CD4-positive, alpha-beta memory T cell (primary cell): ENCODE measurements at regions of chr18 and their contacts with region 1.

Region 1: DNA sequence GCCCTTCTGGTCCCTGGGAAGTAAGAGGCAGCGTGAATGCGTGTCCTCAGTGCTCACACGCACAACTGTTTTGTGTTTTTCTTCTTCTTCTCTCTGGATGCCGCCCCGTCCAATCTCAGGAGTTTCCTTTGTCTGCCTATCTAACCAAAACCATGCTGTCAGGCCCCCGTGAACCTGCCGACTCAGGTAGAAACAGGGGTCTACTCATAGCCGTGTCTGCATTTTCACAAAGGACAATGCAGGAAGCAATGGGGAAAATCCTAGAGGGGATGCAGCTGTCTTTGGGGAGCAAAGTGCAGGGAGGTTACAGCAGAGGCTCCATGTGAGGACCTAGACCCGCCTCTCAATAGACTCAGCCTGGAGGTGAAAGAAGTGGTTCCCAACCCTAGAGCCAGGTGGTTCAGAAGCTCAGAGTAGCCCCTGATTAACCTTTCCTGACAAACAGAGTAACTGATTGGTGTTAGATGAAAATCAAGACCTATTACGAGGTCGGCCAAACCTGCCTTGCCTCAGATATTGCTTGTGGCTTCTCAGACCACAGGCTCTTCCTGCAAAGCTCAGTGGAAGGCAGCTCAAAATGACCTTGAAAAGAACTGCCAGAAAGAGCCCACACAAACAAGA is 49.3 kb downstream of the CD226 start:
- DNase-seq: peak; percentile 20 to 57 (median 28)
- H3K4me3 ChIP-seq: peak overlapping the region; percentile 29 to 54
- H3K4me3 Mint-ChIP-seq: peak overlapping the region; percentile 78 to 91 (median 86)
- H3K27ac ChIP-seq: peak overlapping the region; percentile 64
- H3K27ac Mint-ChIP-seq: peak overlapping the region; percentile 87 to 98 (median 92)
- H3K4me1 ChIP-seq: peaks cover 74% of the 10 kb centered on the region
- H3K4me1 Mint-ChIP-seq: peaks cover 62 to 84% (median 74%) of the 10 kb centered on the region in 4 donors
- H3K27me3 ChIP-seq: no peaks in the 10 kb centered on the region
- H3K27me3 Mint-ChIP-seq: no peaks in the 10 kb centered on the region

Region 2: DNA sequence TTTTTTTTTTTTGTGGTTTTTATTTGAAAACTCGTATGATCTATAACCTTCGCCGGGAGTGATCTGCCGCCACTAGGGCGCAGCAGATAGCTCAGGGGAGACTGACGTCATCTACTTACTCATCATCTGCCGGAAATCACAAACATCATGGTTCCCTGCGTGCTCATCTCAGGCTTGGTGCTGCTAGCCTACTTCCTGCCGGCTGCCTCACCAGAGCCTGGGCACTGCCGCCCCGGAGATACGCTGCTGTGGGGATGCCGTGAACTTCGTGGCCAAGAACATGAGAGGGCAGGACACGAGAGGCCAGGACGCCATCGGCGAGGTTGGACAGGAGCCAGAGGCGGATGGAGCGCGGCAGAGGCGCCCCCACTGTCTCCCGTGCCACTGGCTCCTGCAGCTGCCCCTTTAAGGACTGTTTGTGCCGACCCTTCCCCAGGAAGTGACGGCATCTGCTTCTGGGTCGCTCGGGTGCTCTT is 428.9 kb before region 1 on chr18:
- CTCF ChIA-PET with region 1: no interaction called
- POLR2A ChIA-PET with region 1: no interaction called
- intact Hi-C with region 1: no loop called
- DNase-seq: peak; percentile 23 to 55 (median 41)
- H3K4me3 ChIP-seq: no peak overlapping the region
- H3K4me3 Mint-ChIP-seq: no peak overlapping the region
- H3K27ac ChIP-seq: no peak overlapping the region
- H3K27ac Mint-ChIP-seq: peak overlapping the region in 3 of 7 donors; percentile 46 to 83 (median 51)
- H3K4me1 ChIP-seq: no peaks in the 10 kb centered on the region
- H3K4me1 Mint-ChIP-seq: peaks cover 0 to 14% (median 6%) of the 10 kb centered on the region in 4 donors
- H3K27me3 ChIP-seq: no peaks in the 10 kb centered on the region
- H3K27me3 Mint-ChIP-seq: peaks cover 3% of the 10 kb centered on the region in 2 donors

Region 3: GRCh38 chr18:69885841-69886531 is 12.4 kb before region 1 on chr18:
- CTCF ChIA-PET with region 1: interaction called, 4 read pairs
- POLR2A ChIA-PET with region 1: interaction called, 27 read pairs
- intact Hi-C with region 1: loop called (anchors 1 kb)
- DNase-seq: peak; percentile 21 to 71 (median 26)
- H3K4me3 ChIP-seq: peak overlapping the region in 1 of 2 donors; percentile 17
- H3K4me3 Mint-ChIP-seq: peak overlapping the region; percentile 61 to 88 (median 85)
- H3K27ac ChIP-seq: peak overlapping the region; percentile 25
- H3K27ac Mint-ChIP-seq: peak overlapping the region; percentile 69 to 96 (median 95)
- H3K4me1 ChIP-seq: peaks cover 74% of the 10 kb centered on the region
- H3K4me1 Mint-ChIP-seq: peaks cover 59 to 94% (median 75%) of the 10 kb centered on the region in 4 donors
- H3K27me3 ChIP-seq: no peaks in the 10 kb centered on the region
- H3K27me3 Mint-ChIP-seq: no peaks in the 10 kb centered on the region

Region 4: DNA sequence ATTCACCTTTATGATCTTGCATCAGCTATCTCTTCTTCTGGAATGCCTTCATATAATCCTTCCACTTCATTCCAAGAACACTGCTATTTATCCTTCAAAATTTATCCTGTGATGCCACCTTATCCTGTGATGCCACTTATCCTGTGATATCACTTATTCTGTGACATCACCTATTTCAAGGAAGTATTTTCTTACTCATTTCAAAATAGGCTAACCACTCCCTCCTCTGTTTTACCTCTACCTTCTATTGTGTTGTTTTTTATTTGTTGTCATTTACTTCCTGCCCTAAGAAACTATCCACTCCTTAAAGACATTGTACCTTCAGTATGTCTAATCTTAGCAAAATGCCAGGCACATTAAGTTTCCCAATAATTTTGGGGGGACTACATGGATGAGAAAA is 10.5 kb after region 1 on chr18:
- CTCF ChIA-PET with region 1: interaction called, 9 read pairs
- POLR2A ChIA-PET with region 1: interaction called, 17 read pairs
- intact Hi-C with region 1: loop called (anchors 1 kb)
- DNase-seq: no peak
- H3K4me3 ChIP-seq: no peak overlapping the region
- H3K4me3 Mint-ChIP-seq: peak overlapping the region in 5 of 8 donors; percentile 29 to 85 (median 47)
- H3K27ac ChIP-seq: no peak overlapping the region
- H3K27ac Mint-ChIP-seq: peak overlapping the region; percentile 45 to 86 (median 80)
- H3K4me1 ChIP-seq: peaks cover 68% of the 10 kb centered on the region
- H3K4me1 Mint-ChIP-seq: peaks cover 52 to 82% (median 70%) of the 10 kb centered on the region in 4 donors
- H3K27me3 ChIP-seq: no peaks in the 10 kb centered on the region
- H3K27me3 Mint-ChIP-seq: no peaks in the 10 kb centered on the region

Region 5: GRCh38 chr18:69916412-69916811 is 18.1 kb after region 1 on chr18:
- CTCF ChIA-PET with region 1: interaction called, 3 read pairs
- POLR2A ChIA-PET with region 1: interaction called, 13 read pairs
- intact Hi-C with region 1: no loop called
- DNase-seq: no peak
- H3K4me3 ChIP-seq: no peak overlapping the region
- H3K4me3 Mint-ChIP-seq: peak overlapping the region in 2 of 8 donors; percentile 9 to 42
- H3K27ac ChIP-seq: no peak overlapping the region
- H3K27ac Mint-ChIP-seq: peak overlapping the region in 6 of 7 donors; percentile 16 to 69 (median 46)
- H3K4me1 ChIP-seq: peaks cover 63% of the 10 kb centered on the region
- H3K4me1 Mint-ChIP-seq: peaks cover 55 to 91% (median 73%) of the 10 kb centered on the region in 4 donors
- H3K27me3 ChIP-seq: no peaks in the 10 kb centered on the region
- H3K27me3 Mint-ChIP-seq: no peaks in the 10 kb centered on the region

Region 6: DNA sequence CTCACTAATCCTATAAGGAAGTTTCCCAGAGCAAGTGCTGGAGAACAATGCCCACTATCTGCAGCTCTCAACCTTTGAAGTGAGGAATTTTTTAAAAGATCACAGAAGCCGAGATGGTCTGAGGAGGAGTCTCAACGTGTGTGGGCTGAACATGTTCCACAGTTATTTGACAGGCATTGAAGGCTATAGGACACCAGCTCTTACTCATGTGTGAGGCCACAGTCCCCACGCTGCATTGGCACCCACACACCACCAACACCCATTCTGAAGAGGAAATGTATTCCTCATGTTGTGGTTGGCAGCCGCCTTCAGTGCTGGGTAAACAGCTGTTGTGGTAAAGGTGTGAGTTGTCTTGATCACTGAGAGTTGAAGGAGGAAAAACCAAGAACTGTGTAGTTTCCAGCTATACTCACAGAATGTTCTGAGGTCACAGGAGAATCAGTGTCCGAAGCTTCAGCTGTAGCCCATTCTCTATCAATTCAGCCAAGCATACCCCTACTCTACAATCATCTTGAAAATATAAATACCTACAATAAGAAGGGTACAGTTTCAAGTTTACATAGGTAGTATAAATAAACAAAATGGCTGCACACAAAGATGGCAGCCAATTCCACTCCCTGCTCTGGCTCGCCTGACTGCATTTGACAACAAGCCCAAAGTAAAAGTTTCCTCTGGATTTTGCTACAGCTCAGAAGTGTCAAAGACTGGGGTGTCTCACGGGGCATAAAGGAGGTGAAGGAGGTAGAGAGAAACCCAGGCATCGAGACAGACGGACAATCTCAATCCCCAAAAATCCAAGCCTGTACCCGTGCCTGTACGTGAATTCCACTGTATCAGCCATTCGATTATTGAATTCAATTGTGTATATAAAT is 37.2 kb after region 1 on chr18:
- CTCF ChIA-PET with region 1: interaction called, 21 read pairs
- POLR2A ChIA-PET with region 1: interaction called, 78 read pairs
- intact Hi-C with region 1: loop called (anchors 1 kb)
- DNase-seq: peak; percentile 86 to 95 (median 89)
- H3K4me3 ChIP-seq: peak overlapping the region in 1 of 2 donors; percentile 25
- H3K4me3 Mint-ChIP-seq: peak overlapping the region in 1 of 8 donors; percentile 45
- H3K27ac ChIP-seq: peak overlapping the region; percentile 42
- H3K27ac Mint-ChIP-seq: no peak overlapping the region
- H3K4me1 ChIP-seq: peaks cover 90% of the 10 kb centered on the region
- H3K4me1 Mint-ChIP-seq: peaks cover under 1 to 45% (median 20%) of the 10 kb centered on the region in 4 donors
- H3K27me3 ChIP-seq: no peaks in the 10 kb centered on the region
- H3K27me3 Mint-ChIP-seq: peaks cover 0 to 2% of the 10 kb centered on the region in 2 donors

Region 7: GRCh38 chr18:69947361-69948133 is 49.2 kb after region 1 on chr18 and contains the start of gene CD226:
- CTCF ChIA-PET with region 1: interaction called, 16 read pairs
- POLR2A ChIA-PET with region 1: interaction called, 38 read pairs
- intact Hi-C with region 1: loop called (anchors 2 kb)
- DNase-seq: peak; percentile 61 to 68 (median 64)
- H3K4me3 ChIP-seq: peak within 1 kb of the TSS; percentile 63 to 71
- H3K4me3 Mint-ChIP-seq: peak within 1 kb of the TSS in 2 of 8 donors; percentile 86 to 91
- H3K27ac ChIP-seq: peak within 1 kb of the TSS; percentile 60
- H3K27ac Mint-ChIP-seq: no peak within 1 kb of the TSS
- H3K4me1 ChIP-seq: peaks cover 98% of the 10 kb centered on the region
- H3K4me1 Mint-ChIP-seq: peaks cover 9 to 45% (median 28%) of the 10 kb centered on the region in 4 donors
- H3K27me3 ChIP-seq: no peaks in the 10 kb centered on the region
- H3K27me3 Mint-ChIP-seq: no peaks in the 10 kb centered on the region
- total RNA-seq, gene CD226: 94.6 to 95.7 TPM

Region 8: GRCh38 chr18:69968039-69968438 is 69.7 kb after region 1 on chr18:
- CTCF ChIA-PET with region 1: interaction called, 4 read pairs
- POLR2A ChIA-PET with region 1: interaction called, 10 read pairs
- intact Hi-C with region 1: no loop called
- DNase-seq: peak in 4 of 5 donors; percentile 23 to 51 (median 48)
- H3K4me3 ChIP-seq: no peak overlapping the region
- H3K4me3 Mint-ChIP-seq: peak overlapping the region in 3 of 8 donors; percentile 2 to 12 (median 11)
- H3K27ac ChIP-seq: no peak overlapping the region
- H3K27ac Mint-ChIP-seq: peak overlapping the region in 6 of 7 donors; percentile 68 to 92 (median 82)
- H3K4me1 ChIP-seq: peaks cover 15% of the 10 kb centered on the region
- H3K4me1 Mint-ChIP-seq: peaks cover 17 to 38% (median 29%) of the 10 kb centered on the region in 4 donors
- H3K27me3 ChIP-seq: no peaks in the 10 kb centered on the region
- H3K27me3 Mint-ChIP-seq: no peaks in the 10 kb centered on the region

Region 9: DNA sequence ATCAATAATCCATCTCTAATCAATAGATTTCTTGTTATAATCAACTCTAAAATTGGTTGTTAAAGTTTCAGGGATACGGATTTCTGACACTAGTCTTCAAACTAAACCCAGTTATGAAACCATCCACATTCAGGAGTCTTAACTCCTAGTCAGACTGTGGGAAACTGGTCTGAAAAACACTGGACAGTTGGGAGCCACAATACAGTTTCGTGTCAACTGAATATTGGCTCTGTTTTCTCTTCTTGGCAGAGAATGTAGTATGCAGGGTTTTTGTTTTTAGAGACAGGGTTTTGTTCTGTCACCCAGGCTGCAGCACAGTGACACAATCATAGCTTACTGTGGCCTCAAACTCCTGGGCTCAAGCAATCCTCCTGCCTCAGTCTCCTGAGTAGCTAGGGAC is 184.1 kb after region 1 on chr18:
- CTCF ChIA-PET with region 1: no interaction called
- POLR2A ChIA-PET with region 1: no interaction called
- intact Hi-C with region 1: no loop called
- DNase-seq: no peak
- H3K4me3 ChIP-seq: no peak overlapping the region
- H3K4me3 Mint-ChIP-seq: no peak overlapping the region
- H3K27ac ChIP-seq: no peak overlapping the region
- H3K27ac Mint-ChIP-seq: no peak overlapping the region
- H3K4me1 ChIP-seq: no peaks in the 10 kb centered on the region
- H3K4me1 Mint-ChIP-seq: peaks cover 0 to 1% (median 0%) of the 10 kb centered on the region in 4 donors
- H3K27me3 ChIP-seq: no peaks in the 10 kb centered on the region
- H3K27me3 Mint-ChIP-seq: no peaks in the 10 kb centered on the region